B cell (primary cell): ENCODE measurements at regions of chr19 and their contacts with region 1.

Region 1: GRCh38 chr19:6087074-6087571 is 23.2 kb downstream of the RFX2 start:
- DNase-seq: peak; percentile 47
- ATAC-seq: peak; percentile 58
- H3K4me3 ChIP-seq: peak overlapping the region in 3 of 5 experiments; percentile 33 to 51 (median 44)
- H3K4me3 Mint-ChIP-seq: peak overlapping the region; percentile 71
- H3K27ac ChIP-seq: peak overlapping the region; percentile 58 to 68
- H3K27ac Mint-ChIP-seq: peak overlapping the region; percentile 83
- H3K4me1 ChIP-seq: peaks cover 26 to 28% of the 10 kb centered on the region in 2 donors
- H3K4me1 Mint-ChIP-seq: peaks cover 25% of the 10 kb centered on the region
- H3K27me3 ChIP-seq: no peaks in the 10 kb centered on the region
- H3K27me3 Mint-ChIP-seq: no peaks in the 10 kb centered on the region
- CTCF ChIP-seq: no peak

Region 2: GRCh38 chr19:6005321-6006069 is 81.6 kb before region 1 on chr19:
- CTCF ChIA-PET with region 1: no interaction called
- POLR2A ChIA-PET with region 1: no interaction called
- intact Hi-C with region 1: no loop called
- DNase-seq: no peak
- ATAC-seq: no peak
- H3K4me3 ChIP-seq: no peak overlapping the region
- H3K4me3 Mint-ChIP-seq: no peak overlapping the region
- H3K27ac ChIP-seq: no peak overlapping the region
- H3K27ac Mint-ChIP-seq: no peak overlapping the region
- H3K4me1 ChIP-seq: no peaks in the 10 kb centered on the region
- H3K4me1 Mint-ChIP-seq: no peaks in the 10 kb centered on the region
- H3K27me3 ChIP-seq: no peaks in the 10 kb centered on the region
- H3K27me3 Mint-ChIP-seq: no peaks in the 10 kb centered on the region
- CTCF ChIP-seq: no peak

Region 3: DNA sequence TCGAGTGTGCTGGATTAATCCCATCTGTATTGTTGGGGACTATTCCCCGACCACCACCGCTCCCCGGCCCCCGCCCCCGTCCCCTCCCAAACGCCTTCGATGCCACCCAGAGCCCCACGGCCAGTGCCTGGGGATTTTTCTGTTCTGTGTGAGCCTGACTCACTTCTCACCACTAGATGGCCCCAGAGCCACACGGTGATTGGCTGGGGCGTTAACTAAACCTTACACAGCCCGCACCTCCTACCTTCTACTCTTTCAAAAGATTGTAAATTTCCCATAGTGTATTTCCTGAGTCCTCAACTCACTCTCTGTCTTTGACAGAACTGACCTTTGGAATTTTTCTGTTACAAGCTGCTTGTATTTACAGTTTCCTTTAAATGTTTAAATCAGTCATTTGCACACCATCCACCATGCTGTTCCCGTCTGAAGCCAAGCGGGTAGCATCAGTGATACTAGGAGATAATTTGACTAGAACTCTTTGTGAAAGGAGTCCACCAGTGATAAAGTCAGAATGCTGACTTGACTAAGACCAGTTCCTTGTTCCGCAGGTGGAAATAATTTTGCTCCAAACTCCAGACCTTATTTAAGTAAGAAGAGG is 38.2 kb before region 1 on chr19:
- CTCF ChIA-PET with region 1: interaction called, 14 read pairs
- POLR2A ChIA-PET with region 1: no interaction called
- intact Hi-C with region 1: loop called (anchors 1 kb)
- DNase-seq: peak; percentile 84
- ATAC-seq: peak; percentile 99
- H3K4me3 ChIP-seq: no peak overlapping the region
- H3K4me3 Mint-ChIP-seq: no peak overlapping the region
- H3K27ac ChIP-seq: no peak overlapping the region
- H3K27ac Mint-ChIP-seq: no peak overlapping the region
- H3K4me1 ChIP-seq: no peaks in the 10 kb centered on the region
- H3K4me1 Mint-ChIP-seq: peaks cover 4% of the 10 kb centered on the region
- H3K27me3 ChIP-seq: no peaks in the 10 kb centered on the region
- H3K27me3 Mint-ChIP-seq: no peaks in the 10 kb centered on the region
- CTCF ChIP-seq: peak; percentile 88

Region 4: DNA sequence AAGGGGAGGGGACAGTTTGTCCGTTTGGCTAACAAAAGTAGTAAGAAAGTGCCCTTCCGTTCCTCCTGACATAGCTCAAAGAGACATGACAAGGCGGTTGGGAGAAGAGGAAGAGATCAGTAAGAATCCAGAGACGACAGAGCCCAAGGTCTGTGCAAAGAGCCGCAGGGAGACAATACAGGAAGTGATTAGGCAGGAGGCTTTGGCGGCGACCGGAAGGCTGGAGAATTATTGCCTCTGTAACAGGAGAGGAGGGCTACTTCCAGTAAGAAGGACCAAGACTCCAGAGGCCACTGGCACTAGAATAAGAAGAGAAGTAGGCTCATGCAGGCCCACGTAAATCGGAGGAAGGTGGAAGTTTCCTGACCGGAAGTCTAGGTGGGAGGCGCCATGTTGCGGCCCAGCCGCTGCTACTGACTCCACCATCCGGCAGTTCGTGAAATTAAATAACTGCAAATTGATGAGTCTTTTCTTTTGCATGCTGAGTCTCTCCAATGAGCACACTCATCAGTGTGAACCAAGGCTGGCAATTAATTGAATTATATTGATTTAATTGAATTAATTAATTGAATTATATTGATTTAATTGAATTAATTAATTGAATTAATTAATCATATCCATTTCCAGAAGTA is 13.3 kb after region 1 on chr19:
- CTCF ChIA-PET with region 1: interaction called, 7 read pairs
- POLR2A ChIA-PET with region 1: interaction called, 6 read pairs
- intact Hi-C with region 1: loop called (anchors 2 kb)
- DNase-seq: peak; percentile 74
- ATAC-seq: peak; percentile 70
- H3K4me3 ChIP-seq: peak overlapping the region; percentile 12 to 65 (median 48)
- H3K4me3 Mint-ChIP-seq: peak overlapping the region; percentile 80
- H3K27ac ChIP-seq: peak overlapping the region; percentile 4 to 44
- H3K27ac Mint-ChIP-seq: peak overlapping the region; percentile 80
- H3K4me1 ChIP-seq: peaks cover 11 to 12% of the 10 kb centered on the region in 2 donors
- H3K4me1 Mint-ChIP-seq: peaks cover 14% of the 10 kb centered on the region
- H3K27me3 ChIP-seq: no peaks in the 10 kb centered on the region
- H3K27me3 Mint-ChIP-seq: no peaks in the 10 kb centered on the region
- CTCF ChIP-seq: no peak

Region 5: GRCh38 chr19:6110360-6110977 is 23.3 kb after region 1 on chr19 and contains the start of gene RFX2:
- CTCF ChIA-PET with region 1: interaction called, 7 read pairs
- POLR2A ChIA-PET with region 1: interaction called, 7 read pairs
- intact Hi-C with region 1: loop called (anchors 1 kb)
- DNase-seq: peak; percentile 99
- ATAC-seq: peak; percentile 98
- H3K4me3 ChIP-seq: peak within 1 kb of the TSS; percentile 51 to 74 (median 54)
- H3K4me3 Mint-ChIP-seq: peak within 1 kb of the TSS; percentile 88
- H3K27ac ChIP-seq: peak within 1 kb of the TSS; percentile 30 to 38
- H3K27ac Mint-ChIP-seq: peak within 1 kb of the TSS; percentile 81
- H3K4me1 ChIP-seq: peaks cover 21 to 23% of the 10 kb centered on the region in 2 donors
- H3K4me1 Mint-ChIP-seq: peaks cover 21% of the 10 kb centered on the region
- H3K27me3 ChIP-seq: peaks cover 0 to 34% (median 12%) of the 10 kb centered on the region in 4 experiments
- H3K27me3 Mint-ChIP-seq: peaks cover 21% of the 10 kb centered on the region
- CTCF ChIP-seq: no peak
- total RNA-seq, gene RFX2: 6.5 and 8.6 TPM in 2 replicates